ENCODE measurements at regions of chr2 and their contacts with region 1.

Region 1: DNA sequence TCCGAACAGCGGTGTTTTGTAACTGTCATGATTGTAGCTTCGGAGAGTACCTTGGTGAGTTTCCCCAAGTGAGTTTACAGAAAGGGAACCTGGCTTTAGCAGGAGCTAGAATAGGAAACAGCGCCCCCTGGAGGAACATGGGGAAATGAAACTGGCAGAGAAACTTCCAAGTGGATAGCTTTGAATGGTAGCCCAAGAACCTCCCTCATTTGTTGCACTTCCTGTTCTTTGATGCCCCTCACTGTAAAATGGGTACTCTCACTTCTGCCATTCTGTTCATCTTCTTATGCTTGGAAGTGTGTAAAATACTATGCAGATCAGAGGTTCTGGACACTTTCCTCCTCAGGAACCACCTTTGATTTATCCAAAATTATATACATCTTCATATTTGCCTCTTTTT is 36.2 kb downstream of the CHST10 start:
- DNase-seq: peak; percentile 49 to 87 (median 76)
- H3K4me3 ChIP-seq: no peak overlapping the region
- H3K27ac ChIP-seq: no peak overlapping the region
- H3K27me3 ChIP-seq: no peaks in the 10 kb centered on the region
- CTCF ChIP-seq: peak; percentile 80 to 95 (median 90)

Region 2: DNA sequence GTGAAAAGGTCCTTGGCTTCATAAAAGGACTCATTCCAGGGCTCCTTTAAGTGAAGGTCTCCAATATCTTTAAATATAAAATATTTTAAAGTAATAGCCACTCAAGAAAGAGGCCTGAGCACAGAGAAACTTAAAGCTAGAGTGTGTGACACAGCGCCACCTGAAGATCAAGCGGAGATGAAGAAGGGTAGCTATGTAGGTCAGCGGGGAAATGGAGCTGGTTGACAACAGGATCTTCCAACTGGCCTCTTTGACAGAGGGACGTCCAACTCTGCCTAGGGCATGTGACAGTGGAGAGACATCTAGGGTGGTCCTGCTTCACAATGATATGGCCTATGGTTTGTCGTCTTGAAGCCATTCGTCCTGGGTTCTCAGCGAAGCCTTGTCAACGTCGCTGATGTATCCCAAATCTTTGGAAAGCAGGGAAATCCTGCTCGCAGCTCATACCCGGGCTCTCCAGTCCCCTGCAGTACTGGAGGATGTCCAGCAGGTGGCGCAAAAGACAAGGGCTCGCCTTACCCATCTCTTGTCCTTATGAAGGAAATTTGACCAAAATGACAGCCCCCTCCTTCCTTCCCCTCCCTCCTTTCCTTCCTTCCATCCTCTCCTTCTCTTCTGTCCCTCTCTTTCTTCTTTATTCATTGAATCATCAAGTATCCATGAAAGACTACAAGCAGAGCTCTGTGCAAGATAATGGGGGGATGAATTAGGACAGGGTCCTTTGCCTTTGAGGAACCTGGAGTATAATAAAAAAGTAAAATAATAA is 118.5 kb before region 1 on chr2:
- intact Hi-C with region 1: loop called (anchors 2 kb)
- DNase-seq: peak; percentile 65 to 89 (median 81)
- H3K4me3 ChIP-seq: peak overlapping the region in 3 of 59 donors; percentile 7 to 38 (median 28)
- H3K27ac ChIP-seq: peak overlapping the region in 7 of 59 donors; percentile 30 to 60 (median 40)
- H3K27me3 ChIP-seq: no peaks in the 10 kb centered on the region
- CTCF ChIP-seq: peak; percentile 87 to 99 (median 98)